ENCODE measurements at regions of chr7 and their contacts with region 1.

Region 1: GRCh38 chr7:20598459-20599309 is 16.8 kb upstream of the ABCB5 start:
- DNase-seq: peak; percentile 66
- H3K4me3 ChIP-seq: no peak overlapping the region
- H3K27ac ChIP-seq: no peak overlapping the region
- H3K4me1 ChIP-seq: peaks cover 10% of the 10 kb centered on the region
- H3K27me3 ChIP-seq: no peaks in the 10 kb centered on the region
- CTCF ChIP-seq: peak; percentile 74 to 78

Region 2: GRCh38 chr7:19713676-19714075 is 885.0 kb before region 1 on chr7:
- CTCF ChIA-PET with region 1: interaction called, 24 read pairs
- dilution Hi-C with region 1: no loop called
- in situ Hi-C with region 1: no loop called
- intact Hi-C with region 1: loop called (anchors 1 kb)
- DNase-seq: peak; percentile 21
- H3K4me3 ChIP-seq: no peak overlapping the region
- H3K27ac ChIP-seq: no peak overlapping the region
- H3K4me1 ChIP-seq: no peaks in the 10 kb centered on the region
- H3K27me3 ChIP-seq: no peaks in the 10 kb centered on the region
- CTCF ChIP-seq: peak; percentile 56 to 57

Region 3: DNA sequence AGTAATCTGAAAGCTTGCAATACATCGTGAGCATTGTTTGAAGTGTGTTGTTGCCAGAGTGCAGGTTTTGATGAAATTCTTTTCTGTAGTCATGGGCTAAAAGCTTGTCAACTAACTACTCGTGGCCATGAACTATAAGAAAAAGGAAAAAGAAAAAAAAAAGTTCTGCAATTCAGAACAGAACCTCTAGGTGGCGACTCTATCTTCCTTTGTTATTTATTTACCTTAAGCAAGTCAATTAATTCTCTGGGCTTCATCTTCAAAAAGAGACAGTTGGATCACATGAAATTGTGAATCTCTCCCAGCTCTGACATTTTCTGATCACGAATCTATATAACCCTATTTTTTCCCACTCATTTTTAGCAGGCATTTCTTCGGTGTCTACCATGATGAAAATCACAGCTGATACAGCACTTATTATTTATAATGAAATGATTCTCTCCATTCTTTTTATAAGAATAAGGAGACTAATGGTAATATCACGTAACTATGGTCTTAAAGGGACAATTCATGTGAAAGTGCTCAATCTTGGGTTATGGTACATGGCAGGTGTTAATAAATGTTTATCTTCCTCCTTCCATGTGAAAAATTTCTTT is 844.1 kb before region 1 on chr7:
- CTCF ChIA-PET with region 1: interaction called, 4 read pairs
- dilution Hi-C with region 1: loop called (anchors 25 kb)
- in situ Hi-C with region 1: loop called (anchors 5 to 10 kb)
- intact Hi-C with region 1: loop called (anchors 2 kb)
- DNase-seq: peak; percentile 27
- H3K4me3 ChIP-seq: no peak overlapping the region
- H3K27ac ChIP-seq: no peak overlapping the region
- H3K4me1 ChIP-seq: peaks cover 4% of the 10 kb centered on the region
- H3K27me3 ChIP-seq: no peaks in the 10 kb centered on the region
- CTCF ChIP-seq: peak; percentile 65 to 68

Region 4: GRCh38 chr7:20172736-20173334 is 425.8 kb before region 1 on chr7:
- CTCF ChIA-PET with region 1: interaction called, 4 read pairs
- dilution Hi-C with region 1: no loop called
- in situ Hi-C with region 1: loop called in 1 of 2 experiments (anchors 25 kb)
- intact Hi-C with region 1: loop called (anchors 1 kb)
- DNase-seq: peak; percentile 41
- H3K4me3 ChIP-seq: no peak overlapping the region
- H3K27ac ChIP-seq: no peak overlapping the region
- H3K4me1 ChIP-seq: no peaks in the 10 kb centered on the region
- H3K27me3 ChIP-seq: no peaks in the 10 kb centered on the region
- CTCF ChIP-seq: peak; percentile 70 to 81

Region 5: GRCh38 chr7:20330240-20330927 is 268.3 kb before region 1 on chr7 and contains the start of gene ITGB8:
- CTCF ChIA-PET with region 1: interaction called, 9 read pairs
- dilution Hi-C with region 1: no loop called
- in situ Hi-C with region 1: loop called in 1 of 2 experiments (anchors 10 kb)
- intact Hi-C with region 1: loop called (anchors 1 kb)
- DNase-seq: peak; percentile 97
- H3K4me3 ChIP-seq: peak within 1 kb of the TSS; percentile 76 to 88 (median 78)
- H3K27ac ChIP-seq: peak within 1 kb of the TSS; percentile 95
- H3K4me1 ChIP-seq: peaks cover 25% of the 10 kb centered on the region
- H3K27me3 ChIP-seq: no peaks in the 10 kb centered on the region
- CTCF ChIP-seq: peak in 1 of 2 donors; percentile 13
- total RNA-seq, gene ITGB8: 41.9 to 221 TPM

Region 6: DNA sequence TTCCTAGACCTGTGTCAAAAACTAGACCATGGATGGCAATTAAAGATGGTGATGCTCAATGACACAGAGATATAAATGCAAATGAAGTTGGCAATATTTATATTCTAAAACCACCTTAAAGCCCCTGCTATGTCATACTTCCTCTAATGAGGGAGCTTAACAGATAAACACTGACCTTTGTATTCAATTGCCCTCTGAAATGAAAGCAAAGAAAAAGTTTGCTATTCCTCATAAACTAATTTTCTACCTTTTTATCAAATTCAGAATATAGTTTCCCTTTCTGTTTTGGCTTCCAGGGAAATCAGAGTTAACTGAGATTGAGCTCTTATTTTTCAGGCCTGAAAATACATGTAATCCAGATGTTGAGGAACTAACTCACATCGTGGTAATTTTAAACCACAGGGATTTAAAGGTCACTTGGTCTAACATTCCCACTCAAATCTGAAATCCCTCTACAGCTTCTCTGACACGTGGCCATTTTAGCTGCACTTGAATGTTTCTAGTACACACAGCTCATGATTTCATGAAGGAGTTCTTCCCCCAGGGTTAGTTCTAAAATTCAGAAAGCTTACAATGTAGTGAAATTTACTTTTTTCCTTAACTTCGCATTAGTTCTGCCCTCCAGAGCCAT is 21.1 kb before region 1 on chr7:
- CTCF ChIA-PET with region 1: no interaction called
- dilution Hi-C with region 1: no loop called
- in situ Hi-C with region 1: no loop called
- intact Hi-C with region 1: no loop called
- DNase-seq: no peak
- H3K4me3 ChIP-seq: no peak overlapping the region
- H3K27ac ChIP-seq: no peak overlapping the region
- H3K4me1 ChIP-seq: no peaks in the 10 kb centered on the region
- H3K27me3 ChIP-seq: no peaks in the 10 kb centered on the region
- CTCF ChIP-seq: no peak

Region 7: GRCh38 chr7:20642166-20642565 is 43.5 kb after region 1 on chr7:
- CTCF ChIA-PET with region 1: no interaction called
- dilution Hi-C with region 1: no loop called
- in situ Hi-C with region 1: no loop called
- intact Hi-C with region 1: no loop called
- DNase-seq: no peak
- H3K4me3 ChIP-seq: no peak overlapping the region
- H3K27ac ChIP-seq: no peak overlapping the region
- H3K4me1 ChIP-seq: no peaks in the 10 kb centered on the region
- H3K27me3 ChIP-seq: peaks cover 2% of the 10 kb centered on the region
- CTCF ChIP-seq: no peak

Region 8: GRCh38 chr7:20826243-20826642 is 227.6 kb after region 1 on chr7:
- CTCF ChIA-PET with region 1: interaction called, 13 read pairs
- dilution Hi-C with region 1: no loop called
- in situ Hi-C with region 1: no loop called
- intact Hi-C with region 1: no loop called
- DNase-seq: no peak
- H3K4me3 ChIP-seq: no peak overlapping the region
- H3K27ac ChIP-seq: no peak overlapping the region
- H3K4me1 ChIP-seq: no peaks in the 10 kb centered on the region
- H3K27me3 ChIP-seq: no peaks in the 10 kb centered on the region
- CTCF ChIP-seq: no peak

Measured in mammary epithelial cell (primary cell).